ENCODE measurements at regions of chr5 and their contacts with region 1.

Region 1: GRCh38 chr5:180810210-180810958 is 7.8 kb upstream of the MGAT1 start:
- DNase-seq: peak; percentile 95 to 99 (median 98)
- H3K4me3 ChIP-seq: peak overlapping the region; percentile 60 to 95
- H3K4me3 Mint-ChIP-seq: peak overlapping the region; percentile 83 to 99 (median 90)
- H3K27ac ChIP-seq: peak overlapping the region; percentile 93
- H3K27ac Mint-ChIP-seq: peak overlapping the region; percentile 92 to 100 (median 99)
- H3K4me1 ChIP-seq: peaks cover 61% of the 10 kb centered on the region
- H3K4me1 Mint-ChIP-seq: peaks cover 53 to 87% (median 69%) of the 10 kb centered on the region in 4 donors
- H3K27me3 ChIP-seq: no peaks in the 10 kb centered on the region
- H3K27me3 Mint-ChIP-seq: no peaks in the 10 kb centered on the region

Region 2: GRCh38 chr5:180191716-180192115 is 618.7 kb before region 1 on chr5:
- CTCF ChIA-PET with region 1: no interaction called
- POLR2A ChIA-PET with region 1: no interaction called
- intact Hi-C with region 1: no loop called
- DNase-seq: no peak
- H3K4me3 ChIP-seq: no peak overlapping the region
- H3K4me3 Mint-ChIP-seq: no peak overlapping the region
- H3K27ac ChIP-seq: no peak overlapping the region
- H3K27ac Mint-ChIP-seq: no peak overlapping the region
- H3K4me1 ChIP-seq: no peaks in the 10 kb centered on the region
- H3K4me1 Mint-ChIP-seq: no peaks in the 10 kb centered on the region
- H3K27me3 ChIP-seq: no peaks in the 10 kb centered on the region
- H3K27me3 Mint-ChIP-seq: peaks cover 4 to 8% of the 10 kb centered on the region in 2 donors

Region 3: DNA sequence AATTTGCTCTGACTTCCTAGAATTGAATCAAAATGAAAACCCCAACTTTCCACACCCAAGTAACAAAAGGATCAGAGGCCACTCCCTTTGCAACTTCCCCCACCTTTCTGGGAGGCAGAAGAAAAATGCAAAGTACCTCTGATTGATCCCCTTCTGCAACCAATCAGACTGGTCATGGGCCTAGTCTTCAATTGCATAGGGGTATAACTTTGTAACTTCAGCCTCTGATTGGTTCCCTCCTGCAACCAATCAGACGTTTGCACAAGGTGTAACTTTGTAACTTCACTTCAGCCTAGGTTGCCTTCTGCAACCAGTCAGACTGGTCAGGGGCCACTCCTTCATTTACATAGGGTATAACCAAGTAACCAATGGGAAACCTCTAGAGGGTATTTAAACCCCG is 354.5 kb before region 1 on chr5:
- CTCF ChIA-PET with region 1: no interaction called
- POLR2A ChIA-PET with region 1: no interaction called
- intact Hi-C with region 1: no loop called
- DNase-seq: no peak
- H3K4me3 ChIP-seq: no peak overlapping the region
- H3K4me3 Mint-ChIP-seq: no peak overlapping the region
- H3K27ac ChIP-seq: no peak overlapping the region
- H3K27ac Mint-ChIP-seq: no peak overlapping the region
- H3K4me1 ChIP-seq: no peaks in the 10 kb centered on the region
- H3K4me1 Mint-ChIP-seq: no peaks in the 10 kb centered on the region
- H3K27me3 ChIP-seq: no peaks in the 10 kb centered on the region
- H3K27me3 Mint-ChIP-seq: peaks cover 22 to 25% of the 10 kb centered on the region in 2 donors

Region 4: DNA sequence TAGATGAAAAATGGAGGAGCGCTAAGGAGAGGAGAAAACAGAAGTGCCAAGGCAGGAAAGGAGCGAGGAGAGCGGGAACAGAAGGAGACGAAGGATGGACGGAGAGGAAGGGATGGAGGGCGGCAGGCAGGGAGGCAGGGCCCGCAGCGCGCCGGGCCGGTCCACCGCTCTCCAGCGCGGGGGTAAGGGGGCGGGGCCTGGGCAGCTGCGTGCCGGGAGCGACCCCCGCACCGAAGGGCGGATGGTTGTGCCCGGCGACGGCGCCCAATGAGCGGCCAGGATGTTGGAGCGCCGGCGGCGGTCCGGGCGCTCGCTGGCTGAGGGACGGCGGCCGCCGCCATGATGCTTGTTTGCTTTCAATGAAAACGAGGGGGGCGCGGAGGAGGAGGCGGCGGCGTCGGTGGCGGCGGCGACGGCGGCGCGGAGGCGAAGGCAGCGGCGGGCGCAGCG is 316.3 kb before region 1 on chr5 and contains the start of gene CNOT6:
- CTCF ChIA-PET with region 1: no interaction called
- POLR2A ChIA-PET with region 1: no interaction called
- intact Hi-C with region 1: loop called (anchors 1 kb)
- DNase-seq: peak; percentile 92 to 97 (median 96)
- H3K4me3 ChIP-seq: peak within 1 kb of the TSS; percentile 17 to 72
- H3K4me3 Mint-ChIP-seq: peak within 1 kb of the TSS; percentile 91 to 98 (median 94)
- H3K27ac ChIP-seq: peak within 1 kb of the TSS; percentile 84
- H3K27ac Mint-ChIP-seq: peak within 1 kb of the TSS; percentile 91 to 99 (median 96)
- H3K4me1 ChIP-seq: peaks cover 42% of the 10 kb centered on the region
- H3K4me1 Mint-ChIP-seq: peaks cover 24 to 46% (median 38%) of the 10 kb centered on the region in 4 donors
- H3K27me3 ChIP-seq: no peaks in the 10 kb centered on the region
- H3K27me3 Mint-ChIP-seq: no peaks in the 10 kb centered on the region
- total RNA-seq, gene CNOT6: 30.1 to 37.8 TPM

Region 5: GRCh38 chr5:180784497-180785097 is 25.8 kb before region 1 on chr5:
- CTCF ChIA-PET with region 1: interaction called, 3 read pairs
- POLR2A ChIA-PET with region 1: interaction called, 6 read pairs
- intact Hi-C with region 1: loop called (anchors 2 kb)
- DNase-seq: peak; percentile 68 to 81 (median 72)
- H3K4me3 ChIP-seq: no peak overlapping the region
- H3K4me3 Mint-ChIP-seq: no peak overlapping the region
- H3K27ac ChIP-seq: no peak overlapping the region
- H3K27ac Mint-ChIP-seq: peak overlapping the region in 2 of 7 donors; percentile 6 to 14
- H3K4me1 ChIP-seq: peaks cover 8% of the 10 kb centered on the region
- H3K4me1 Mint-ChIP-seq: peaks cover 10 to 25% (median 18%) of the 10 kb centered on the region in 4 donors
- H3K27me3 ChIP-seq: no peaks in the 10 kb centered on the region
- H3K27me3 Mint-ChIP-seq: no peaks in the 10 kb centered on the region

Region 6: GRCh38 chr5:180825768-180826525 is 15.6 kb after region 1 on chr5:
- CTCF ChIA-PET with region 1: interaction called, 109 read pairs
- POLR2A ChIA-PET with region 1: interaction called, 271 read pairs
- intact Hi-C with region 1: loop called (anchors 1 kb)
- DNase-seq: no peak
- H3K4me3 ChIP-seq: no peak overlapping the region
- H3K4me3 Mint-ChIP-seq: no peak overlapping the region
- H3K27ac ChIP-seq: no peak overlapping the region
- H3K27ac Mint-ChIP-seq: peak overlapping the region in 3 of 7 donors; percentile 41 to 53 (median 47)
- H3K4me1 ChIP-seq: peaks cover 22% of the 10 kb centered on the region
- H3K4me1 Mint-ChIP-seq: peaks cover 19 to 46% (median 26%) of the 10 kb centered on the region in 4 donors
- H3K27me3 ChIP-seq: no peaks in the 10 kb centered on the region
- H3K27me3 Mint-ChIP-seq: no peaks in the 10 kb centered on the region

Region 7: DNA sequence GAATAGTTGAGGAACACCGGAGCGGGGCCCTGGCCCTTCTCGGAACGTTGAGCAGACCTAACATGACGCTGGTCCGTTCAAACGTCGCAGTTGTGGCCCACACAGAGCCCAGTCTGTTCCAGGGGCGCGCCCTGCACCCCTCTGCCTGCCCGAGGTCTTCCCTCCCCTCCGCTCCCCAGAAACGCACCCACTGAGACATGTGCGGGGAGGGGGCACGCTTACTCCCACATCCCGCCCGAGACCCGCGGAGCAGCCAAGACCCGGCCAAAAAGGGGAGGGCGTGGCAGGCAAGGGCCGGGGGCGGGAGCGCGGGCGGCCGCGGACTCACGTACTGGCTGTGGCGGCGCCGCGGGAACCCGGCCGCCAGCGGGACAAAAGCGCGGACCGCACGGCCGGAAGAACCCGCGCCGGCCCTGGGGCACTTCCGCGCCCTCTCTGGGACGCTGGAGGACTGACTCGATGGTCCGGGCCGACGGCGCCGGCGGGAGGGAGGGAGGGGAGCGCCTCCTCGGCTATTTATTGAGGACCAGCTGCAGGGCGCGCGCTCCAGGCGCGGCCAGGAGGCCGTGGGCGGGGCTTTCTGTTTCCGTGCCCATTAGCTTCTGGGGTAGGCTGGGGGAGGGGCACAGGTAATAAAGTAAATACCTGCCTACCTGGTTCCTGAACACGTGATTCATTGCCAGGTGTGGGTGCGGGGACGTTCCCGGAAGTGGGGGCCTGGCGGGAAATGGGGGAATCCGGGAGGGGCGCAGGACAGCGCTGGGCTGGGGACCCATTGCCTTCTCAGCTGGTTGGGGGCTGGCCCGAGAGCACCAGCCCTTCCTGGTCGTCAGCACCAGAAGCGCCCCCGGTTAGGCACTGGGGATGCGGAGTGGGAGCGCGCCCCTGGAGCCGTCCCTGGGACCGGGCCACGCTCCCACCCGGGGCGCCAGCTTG is 50.8 kb after region 1 on chr5 and contains the start of gene ZFP62:
- CTCF ChIA-PET with region 1: interaction called, 5 read pairs
- POLR2A ChIA-PET with region 1: interaction called, 47 read pairs
- intact Hi-C with region 1: loop called (anchors 1 kb)
- DNase-seq: peak; percentile 86 to 89 (median 86)
- H3K4me3 ChIP-seq: peak within 1 kb of the TSS; percentile 36 to 96
- H3K4me3 Mint-ChIP-seq: peak within 1 kb of the TSS; percentile 90 to 95 (median 92)
- H3K27ac ChIP-seq: peak within 1 kb of the TSS; percentile 67
- H3K27ac Mint-ChIP-seq: peak within 1 kb of the TSS; percentile 96 to 98 (median 97)
- H3K4me1 ChIP-seq: peaks cover 9% of the 10 kb centered on the region
- H3K4me1 Mint-ChIP-seq: peaks cover 13 to 31% (median 19%) of the 10 kb centered on the region in 4 donors
- H3K27me3 ChIP-seq: no peaks in the 10 kb centered on the region
- H3K27me3 Mint-ChIP-seq: peaks cover 0 to 2% of the 10 kb centered on the region in 2 donors
- total RNA-seq, gene ZFP62: 71.1 to 71.7 TPM